HepG2 (cell line): ENCODE measurements at regions of chr12 and their contacts with region 1.

Region 1: GRCh38 chr12:128387811-128388422 is 120.9 kb downstream of the TMEM132C start:
- DNase-seq: peak; percentile 27
- ATAC-seq: peak; percentile 98
- H3K4me3 ChIP-seq: no peak overlapping the region
- H3K27ac ChIP-seq: no peak overlapping the region
- H3K4me1 ChIP-seq: no peaks in the 10 kb centered on the region
- H3K27me3 ChIP-seq: peaks cover 0 to 15% of the 10 kb centered on the region in 2 experiments; a peak in 2 of 5 replicates
- CTCF ChIP-seq: peak; percentile 75
- EP300 ChIP-seq: no peak
- POLR2A ChIP-seq: no peak
- RAD21 ChIP-seq: no peak

Region 2: DNA sequence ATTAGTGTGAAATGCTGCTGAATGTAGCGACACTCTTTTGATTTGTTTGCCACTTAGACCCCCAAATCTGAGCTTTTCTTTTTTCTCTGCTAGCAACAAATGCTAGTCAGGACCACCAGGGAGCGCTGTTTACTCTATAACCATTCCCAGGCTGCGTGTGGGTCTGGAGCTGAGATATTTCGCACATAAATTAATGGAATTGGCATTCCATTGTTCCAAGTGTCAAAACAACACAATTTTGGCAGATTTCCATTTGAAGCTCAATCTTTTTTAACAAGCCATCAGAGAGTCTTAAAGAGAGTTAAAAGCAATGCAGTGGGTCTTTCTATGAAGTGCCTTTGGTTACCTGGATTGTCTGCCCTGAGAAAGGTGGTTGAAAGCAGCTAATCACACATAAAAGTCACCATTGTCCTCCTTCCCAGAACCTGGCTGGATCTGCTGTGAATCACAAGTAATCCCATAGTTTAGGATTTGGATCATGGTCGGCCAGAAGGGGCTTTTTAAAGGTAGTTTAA is 128.3 kb before region 1 on chr12:
- CTCF ChIA-PET with region 1: interaction called, 13 read pairs
- POLR2A ChIA-PET with region 1: no interaction called
- in situ Hi-C with region 1: loop called (anchors 5 kb)
- intact Hi-C with region 1: no loop called
- DNase-seq: peak; percentile 24
- ATAC-seq: peak; percentile 52; the same call in 2 of the 3 replicates
- H3K4me3 ChIP-seq: no peak overlapping the region
- H3K27ac ChIP-seq: no peak overlapping the region
- H3K4me1 ChIP-seq: no peaks in the 10 kb centered on the region
- H3K27me3 ChIP-seq: no peaks in the 10 kb centered on the region
- CTCF ChIP-seq: peak; percentile 72
- EP300 ChIP-seq: no peak
- POLR2A ChIP-seq: no peak
- RAD21 ChIP-seq: no peak; the same call in 1 of the 2 replicates

Region 3: DNA sequence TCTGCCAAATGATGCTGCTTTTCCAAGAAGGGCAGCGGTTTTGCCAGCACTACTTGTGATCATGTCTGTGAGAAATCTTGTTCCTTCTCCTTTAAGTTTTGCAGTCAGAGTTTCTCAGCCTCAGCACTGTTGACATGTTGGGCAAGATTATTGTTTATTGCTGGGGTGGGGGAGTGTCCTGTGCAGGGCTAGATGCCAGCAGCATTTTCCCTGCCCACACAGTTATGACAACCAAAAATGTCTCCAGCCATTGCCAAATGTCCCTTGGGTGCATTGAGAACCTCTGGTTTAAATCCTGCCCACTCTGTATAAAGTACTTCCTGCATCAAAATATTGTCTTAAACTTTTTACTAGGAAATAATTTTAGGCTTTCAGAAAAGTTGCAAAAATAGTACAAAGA is 100.9 kb before region 1 on chr12:
- CTCF ChIA-PET with region 1: no interaction called
- POLR2A ChIA-PET with region 1: no interaction called
- in situ Hi-C with region 1: no loop called
- intact Hi-C with region 1: no loop called
- DNase-seq: no peak
- ATAC-seq: no peak
- H3K4me3 ChIP-seq: no peak overlapping the region
- H3K27ac ChIP-seq: no peak overlapping the region
- H3K4me1 ChIP-seq: no peaks in the 10 kb centered on the region
- H3K27me3 ChIP-seq: no peaks in the 10 kb centered on the region; a peak in 1 of 5 replicates
- CTCF ChIP-seq: no peak
- EP300 ChIP-seq: no peak
- POLR2A ChIP-seq: no peak
- RAD21 ChIP-seq: no peak